ENCODE measurements at regions of chrX and their contacts with region 1.

Region 1: GRCh38 chrX:45485686-45486085 is 285.0 kb upstream of the DIPK2B start:
- DNase-seq: no peak
- H3K4me3 ChIP-seq: no peak overlapping the region
- H3K27ac ChIP-seq: no peak overlapping the region
- H3K4me1 ChIP-seq: no peaks in the 10 kb centered on the region
- H3K27me3 ChIP-seq: no peaks in the 10 kb centered on the region
- CTCF ChIP-seq: no peak

Region 2: GRCh38 chrX:45186643-45187026 is 299.1 kb before region 1 on chrX:
- intact Hi-C with region 1: no loop called
- DNase-seq: no peak
- H3K4me3 ChIP-seq: no peak overlapping the region
- H3K27ac ChIP-seq: no peak overlapping the region
- H3K4me1 ChIP-seq: peaks cover 0 to 5% (median 0%) of the 10 kb centered on the region in 4 donors
- H3K27me3 ChIP-seq: no peaks in the 10 kb centered on the region
- CTCF ChIP-seq: no peak

Region 3: DNA sequence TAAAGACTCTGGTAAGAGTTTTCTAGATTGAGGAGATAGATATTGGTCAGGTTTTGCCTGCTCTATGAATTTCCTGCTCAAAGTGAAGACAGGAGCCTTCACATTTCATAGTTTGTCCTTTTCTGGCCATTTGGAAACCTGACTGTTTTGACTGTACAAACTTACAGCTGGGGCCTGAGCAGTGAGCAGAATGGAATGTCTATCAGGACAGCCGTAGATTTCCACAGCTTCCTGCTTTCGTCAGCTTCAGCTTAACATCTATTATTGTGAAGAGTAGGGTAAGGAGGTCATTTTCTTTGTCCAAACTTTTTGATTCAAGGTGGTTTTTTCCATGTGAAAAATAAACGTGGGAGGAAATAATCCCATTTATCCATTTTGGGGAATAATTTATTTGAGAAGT is 160.7 kb before region 1 on chrX:
- intact Hi-C with region 1: no loop called
- DNase-seq: no peak
- H3K4me3 ChIP-seq: no peak overlapping the region
- H3K27ac ChIP-seq: no peak overlapping the region
- H3K4me1 ChIP-seq: no peaks in the 10 kb centered on the region
- H3K27me3 ChIP-seq: no peaks in the 10 kb centered on the region
- CTCF ChIP-seq: no peak

Region 4: GRCh38 chrX:45557390-45557789 is 71.7 kb after region 1 on chrX:
- intact Hi-C with region 1: no loop called
- DNase-seq: no peak
- H3K4me3 ChIP-seq: no peak overlapping the region
- H3K27ac ChIP-seq: no peak overlapping the region
- H3K4me1 ChIP-seq: no peaks in the 10 kb centered on the region
- H3K27me3 ChIP-seq: no peaks in the 10 kb centered on the region
- CTCF ChIP-seq: peak in 1 of 2 experiments; percentile 12

Region 5: GRCh38 chrX:45801554-45801953 is 315.9 kb after region 1 on chrX:
- intact Hi-C with region 1: loop called (anchors 5 kb)
- DNase-seq: no peak
- H3K4me3 ChIP-seq: peak overlapping the region in 1 of 2 donors; percentile 25
- H3K27ac ChIP-seq: peak overlapping the region in 1 of 2 donors; percentile 61
- H3K4me1 ChIP-seq: peaks cover 0 to 25% (median 2%) of the 10 kb centered on the region in 4 donors
- H3K27me3 ChIP-seq: no peaks in the 10 kb centered on the region
- CTCF ChIP-seq: peak in 1 of 2 experiments; percentile 9